Adrenal gland (tissue), 19 donors: ENCODE measurements at regions of chr1 and their contacts with region 1.

Region 1: DNA sequence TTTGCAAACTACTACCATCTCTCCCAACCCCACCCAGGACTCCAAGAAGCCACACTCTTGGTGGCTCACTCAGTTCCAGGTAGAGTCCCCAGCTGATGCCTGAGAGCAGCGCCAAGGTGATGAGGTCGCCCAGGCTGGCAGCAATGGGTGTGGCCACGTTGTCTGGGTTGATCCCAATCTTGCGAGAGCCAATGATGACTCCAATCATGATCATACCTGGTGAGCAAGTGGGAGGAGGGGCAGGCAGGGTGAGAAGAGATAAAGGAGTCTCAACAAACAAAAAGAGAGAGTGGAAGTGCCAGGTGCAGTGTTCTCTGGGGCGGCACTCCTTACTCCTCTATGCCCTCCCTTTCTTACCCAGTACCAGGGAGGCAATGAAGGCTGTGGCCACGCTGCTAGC is 14.4 kb downstream of the SLC41A1 start:
- DNase-seq: no peak
- H3K4me3 ChIP-seq: no peak overlapping the region
- H3K27ac ChIP-seq: no peak overlapping the region
- H3K4me1 ChIP-seq: no peaks in the 10 kb centered on the region
- H3K27me3 ChIP-seq: no peaks in the 10 kb centered on the region
- CTCF ChIP-seq: no peak
- POLR2A ChIP-seq: no peak

Region 2: DNA sequence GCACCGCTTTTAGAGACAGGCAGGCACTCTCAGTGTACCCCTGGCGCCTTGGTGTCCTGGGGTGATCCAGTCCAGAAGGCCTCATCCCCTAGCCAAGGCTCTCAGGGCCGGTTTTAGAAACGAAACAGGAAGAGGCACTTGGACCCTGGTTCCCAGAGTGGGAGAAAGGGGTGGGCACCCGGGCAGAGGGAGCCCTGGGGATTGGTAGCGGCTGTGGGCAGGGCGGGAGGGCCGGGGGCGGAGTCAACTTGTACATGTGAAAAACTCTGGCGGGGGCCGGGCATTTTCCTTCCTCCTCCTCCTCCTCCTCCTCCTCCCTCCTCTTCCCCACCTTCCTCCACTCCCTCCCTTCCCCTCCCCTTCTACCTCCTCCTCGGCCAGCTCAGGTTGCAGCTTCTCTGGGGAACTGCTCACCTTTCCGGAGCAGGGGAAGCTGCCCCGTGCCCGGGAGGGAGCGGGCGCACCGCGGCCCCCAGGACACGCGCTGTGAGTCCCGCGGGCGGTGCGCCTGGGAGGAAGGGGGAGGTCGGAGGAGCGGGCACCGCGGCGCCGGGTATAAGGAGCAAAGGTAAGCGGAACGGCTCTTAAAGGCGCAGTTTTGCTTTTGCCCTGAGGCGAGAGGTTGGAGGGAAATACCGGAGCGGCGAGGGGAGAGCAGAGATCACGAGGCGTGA is 294.2 kb before region 1 on chr1 and contains the start of gene CDK18:
- intact Hi-C with region 1: no loop called
- DNase-seq: peak; percentile 77 to 94 (median 90)
- H3K4me3 ChIP-seq: peak within 1 kb of the TSS in 3 of 4 donors; percentile 16 to 69 (median 53)
- H3K27ac ChIP-seq: peak within 1 kb of the TSS in 3 of 5 donors; percentile 10 to 73 (median 50)
- H3K4me1 ChIP-seq: peaks cover 10 to 15% of the 10 kb centered on the region in 2 donors
- H3K27me3 ChIP-seq: no peaks in the 10 kb centered on the region
- CTCF ChIP-seq: no peak
- POLR2A ChIP-seq: no peak
- total RNA-seq, gene CDK18: 3.2 to 31.3 (median 18.5) TPM

Region 3: DNA sequence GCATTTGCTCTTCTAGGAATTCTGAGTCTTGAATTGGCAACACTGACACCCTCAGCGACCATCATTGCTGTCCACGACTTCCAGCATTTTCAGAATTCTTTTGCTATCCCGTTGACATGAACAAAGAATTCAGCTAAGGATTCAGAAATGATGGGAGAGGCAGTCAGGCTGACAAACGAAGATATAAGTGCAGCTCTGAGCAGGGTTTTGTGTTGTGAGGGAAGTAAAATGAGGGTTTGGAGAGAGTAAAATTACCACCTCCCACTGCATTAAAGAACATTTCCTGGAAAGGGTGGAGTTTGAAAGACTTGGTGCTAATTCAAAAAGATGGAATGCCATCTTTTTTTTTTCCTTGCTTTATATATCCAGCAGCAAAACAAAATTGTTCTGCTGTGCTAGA is 161.9 kb before region 1 on chr1:
- intact Hi-C with region 1: no loop called
- DNase-seq: no peak
- H3K4me3 ChIP-seq: no peak overlapping the region
- H3K27ac ChIP-seq: no peak overlapping the region
- H3K4me1 ChIP-seq: peaks cover 0 to 11% of the 10 kb centered on the region in 2 donors
- H3K27me3 ChIP-seq: no peaks in the 10 kb centered on the region
- CTCF ChIP-seq: no peak
- POLR2A ChIP-seq: no peak

Region 4: GRCh38 chr1:205907794-205908193 is 109.2 kb after region 1 on chr1:
- intact Hi-C with region 1: loop called (anchors 5 to 10 kb)
- DNase-seq: peak in 2 of 7 donors; percentile 29 to 35
- H3K4me3 ChIP-seq: no peak overlapping the region
- H3K27ac ChIP-seq: no peak overlapping the region
- H3K4me1 ChIP-seq: no peaks in the 10 kb centered on the region
- H3K27me3 ChIP-seq: peaks cover 15% of the 10 kb centered on the region
- CTCF ChIP-seq: peak; percentile 14 to 57 (median 54)
- POLR2A ChIP-seq: no peak